ENCODE measurements at regions of chr12 and their contacts with region 1.

Region 1: GRCh38 chr12:8949342-8950220 is at the start of gene M6PR:
- DNase-seq: peak; percentile 92
- H3K4me3 ChIP-seq: peak within 1 kb of the TSS; percentile 65 to 70
- H3K27ac ChIP-seq: peak within 1 kb of the TSS; percentile 90 to 97
- H3K4me1 ChIP-seq: peaks cover 4% of the 10 kb centered on the region
- H3K27me3 ChIP-seq: no peaks in the 10 kb centered on the region
- CTCF ChIP-seq: peak; percentile 27 to 75 (median 56)
- POLR2A ChIP-seq: peak; percentile 78
- total RNA-seq, gene M6PR: 128 to 141 TPM

Region 2: GRCh38 chr12:8905546-8905945 is 44.0 kb before region 1 on chr12:
- intact Hi-C with region 1: loop called (anchors 5 kb)
- DNase-seq: no peak
- H3K4me3 ChIP-seq: no peak overlapping the region
- H3K27ac ChIP-seq: no peak overlapping the region
- H3K4me1 ChIP-seq: no peaks in the 10 kb centered on the region
- H3K27me3 ChIP-seq: no peaks in the 10 kb centered on the region
- CTCF ChIP-seq: no peak
- POLR2A ChIP-seq: no peak

Region 3: GRCh38 chr12:9001233-9001632 is 51.7 kb after region 1 on chr12:
- intact Hi-C with region 1: no loop called
- DNase-seq: no peak
- H3K4me3 ChIP-seq: no peak overlapping the region
- H3K27ac ChIP-seq: no peak overlapping the region
- H3K4me1 ChIP-seq: no peaks in the 10 kb centered on the region
- H3K27me3 ChIP-seq: no peaks in the 10 kb centered on the region
- CTCF ChIP-seq: no peak
- POLR2A ChIP-seq: no peak

Region 4: GRCh38 chr12:9039397-9039977 is 89.9 kb after region 1 on chr12:
- intact Hi-C with region 1: loop called (anchors 10 kb)
- DNase-seq: peak; percentile 33
- H3K4me3 ChIP-seq: no peak overlapping the region
- H3K27ac ChIP-seq: no peak overlapping the region
- H3K4me1 ChIP-seq: no peaks in the 10 kb centered on the region
- H3K27me3 ChIP-seq: no peaks in the 10 kb centered on the region
- CTCF ChIP-seq: peak; percentile 48 to 85 (median 74)
- POLR2A ChIP-seq: no peak